Head of caudate nucleus (tissue), 42 donors: ENCODE measurements at regions of chr1 and their contacts with region 1.

Region 1: GRCh38 chr1:218361298-218362065 is 16.3 kb downstream of the TGFB2 start:
- DNase-seq: no peak

Region 2: DNA sequence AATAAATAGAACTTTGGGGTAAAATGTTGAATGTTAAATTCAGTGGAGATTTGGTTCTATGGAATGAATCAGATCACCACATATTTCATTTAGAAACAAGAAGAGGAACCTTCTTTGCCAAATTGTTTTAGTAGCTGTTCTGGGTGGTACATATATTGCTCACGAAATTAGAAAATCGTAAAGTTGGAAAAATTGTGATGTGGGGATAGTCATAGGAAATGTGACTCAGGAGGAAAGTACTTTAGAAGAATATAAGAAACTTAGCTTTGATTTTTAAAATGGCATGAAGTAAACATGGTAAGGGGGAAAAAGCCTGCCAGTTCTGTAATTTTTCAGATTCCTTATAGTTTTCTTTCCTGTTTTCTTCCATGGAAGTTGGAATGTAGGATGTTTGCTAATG is 49.0 kb before region 1 on chr1:
- intact Hi-C with region 1: no loop called
- DNase-seq: no peak

Region 3: GRCh38 chr1:218459878-218460711 is 98.6 kb after region 1 on chr1:
- intact Hi-C with region 1: loop called (anchors 10 kb)
- DNase-seq: peak in 27 of 42 donors; percentile 8 to 70 (median 35)